Ascending aorta (tissue), 2 donors: ENCODE measurements at regions of chr20 and their contacts with region 1.

Region 1: GRCh38 chr20:5950271-5951031 is at the starts of genes MCM8 and TRMT6:
- DNase-seq: peak; percentile 85 to 98
- H3K4me3 ChIP-seq: peak within 1 kb of the TSS; percentile 78 to 93
- H3K27ac ChIP-seq: peak within 1 kb of the TSS; percentile 80 to 85
- H3K4me1 ChIP-seq: peaks cover 5 to 8% of the 10 kb centered on the region in 2 donors
- H3K27me3 ChIP-seq: no peaks in the 10 kb centered on the region
- CTCF ChIP-seq: no peak
- total RNA-seq, gene MCM8: 0.96 TPM
- total RNA-seq, gene TRMT6: 7.8 TPM

Region 2: DNA sequence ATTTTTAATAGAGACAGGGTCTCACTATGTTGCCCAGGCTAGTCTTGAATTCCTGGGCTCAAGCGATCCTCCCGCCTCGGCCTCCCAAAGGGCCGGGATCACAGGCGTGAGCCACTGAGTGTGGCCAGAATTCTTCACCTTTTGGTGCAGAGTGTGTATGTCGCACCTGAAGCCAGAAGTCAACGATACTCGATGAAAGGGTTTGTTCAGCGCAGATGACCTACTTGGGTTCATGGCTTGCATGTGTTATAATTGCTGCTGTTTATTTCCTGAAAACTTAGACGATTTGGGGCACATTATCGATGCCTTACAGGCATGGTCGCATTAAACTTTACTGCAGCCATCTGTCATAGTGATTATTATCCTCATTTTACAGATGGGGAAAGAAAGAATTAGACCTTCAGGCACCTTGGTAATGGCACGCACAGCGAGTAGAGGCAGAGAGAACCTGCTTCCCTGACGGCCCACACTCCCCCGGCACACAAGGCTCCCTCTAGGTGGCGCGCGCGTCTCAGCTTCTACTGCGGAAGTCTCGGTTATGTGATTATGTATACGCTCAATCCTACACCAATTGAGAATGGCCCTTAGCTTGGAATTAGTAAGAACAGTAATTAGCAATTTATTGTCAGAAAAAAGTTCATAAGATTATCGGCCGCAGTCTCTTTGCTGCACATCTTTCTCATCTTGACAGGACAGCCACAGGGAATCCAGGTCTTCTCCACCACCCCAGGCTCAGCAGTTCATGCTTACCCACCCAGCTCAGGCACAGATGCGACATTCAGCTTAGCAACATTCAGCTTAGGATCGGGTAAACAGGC is 420.9 kb before region 1 on chr20:
- intact Hi-C with region 1: loop called (anchors 10 kb)
- DNase-seq: peak; percentile 31 to 83
- H3K4me3 ChIP-seq: peak overlapping the region in 1 of 2 donors; percentile 47
- H3K27ac ChIP-seq: no peak overlapping the region
- H3K4me1 ChIP-seq: no peaks in the 10 kb centered on the region
- H3K27me3 ChIP-seq: no peaks in the 10 kb centered on the region
- CTCF ChIP-seq: peak; percentile 24 to 77 (median 68)

Region 3: GRCh38 chr20:5749952-5750779 is 200.3 kb before region 1 on chr20 and contains the start of gene SHLD1:
- intact Hi-C with region 1: loop called (anchors 1 kb)
- DNase-seq: peak; percentile 45 to 89
- H3K4me3 ChIP-seq: peak within 1 kb of the TSS; percentile 61 to 69
- H3K27ac ChIP-seq: peak within 1 kb of the TSS; percentile 80 to 86
- H3K4me1 ChIP-seq: peaks cover 0 to 6% of the 10 kb centered on the region in 2 donors
- H3K27me3 ChIP-seq: no peaks in the 10 kb centered on the region
- CTCF ChIP-seq: no peak
- total RNA-seq, gene SHLD1: not detected

Region 4: DNA sequence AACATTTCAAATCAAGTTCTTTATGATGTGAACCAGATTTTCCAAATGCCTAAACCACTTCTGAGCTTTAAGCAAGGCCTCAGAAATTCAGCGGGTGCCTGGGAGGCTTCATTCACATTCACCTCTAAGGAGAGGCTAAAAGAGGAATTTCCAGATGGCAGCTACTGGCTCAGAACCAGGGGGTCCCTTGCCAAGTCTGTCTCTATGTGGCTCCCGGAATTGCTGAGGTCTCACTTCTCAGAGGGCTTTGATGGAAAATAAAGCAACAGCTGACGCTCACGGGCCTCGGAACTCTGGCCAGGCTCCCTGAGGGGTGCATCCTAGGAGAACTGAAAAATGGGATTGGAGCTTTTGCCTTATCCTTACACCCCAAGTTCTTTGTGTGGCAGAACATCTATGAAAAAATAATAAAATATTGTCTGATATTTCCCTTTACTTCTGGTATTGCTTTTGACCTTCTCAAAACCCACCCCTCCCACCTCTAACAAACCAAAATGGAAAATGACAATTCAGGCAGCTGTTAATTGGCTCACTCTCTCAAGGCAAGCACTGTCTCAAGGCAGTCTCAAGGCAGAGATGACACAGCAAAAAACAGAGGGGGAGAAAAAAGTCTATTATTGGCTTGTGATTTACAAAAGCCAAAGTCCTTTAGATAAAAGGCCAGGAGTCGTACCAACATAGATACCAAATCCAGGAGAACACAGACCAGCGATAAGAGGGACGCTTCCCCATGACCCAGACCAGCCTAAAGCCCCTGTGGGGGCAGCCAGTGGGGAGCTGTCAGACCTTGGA is 125.2 kb after region 1 on chr20:
- intact Hi-C with region 1: loop called (anchors 5 kb)
- DNase-seq: no peak
- H3K4me3 ChIP-seq: no peak overlapping the region
- H3K27ac ChIP-seq: no peak overlapping the region
- H3K4me1 ChIP-seq: no peaks in the 10 kb centered on the region
- H3K27me3 ChIP-seq: no peaks in the 10 kb centered on the region
- CTCF ChIP-seq: no peak